ENCODE measurements at regions of chr12 and their contacts with region 1.

Region 1: GRCh38 chr12:22443379-22444316 is 100.7 kb downstream of the C2CD5 start:
- DNase-seq: peak; percentile 83
- ATAC-seq: peak; percentile 99
- H3K4me3 ChIP-seq: no peak overlapping the region
- H3K4me3 Mint-ChIP-seq: no peak overlapping the region
- H3K27ac ChIP-seq: no peak overlapping the region
- H3K27ac Mint-ChIP-seq: no peak overlapping the region
- H3K4me1 ChIP-seq: peaks cover 0 to 3% of the 10 kb centered on the region in 2 donors
- H3K4me1 Mint-ChIP-seq: no peaks in the 10 kb centered on the region
- H3K27me3 ChIP-seq: no peaks in the 10 kb centered on the region
- H3K27me3 Mint-ChIP-seq: no peaks in the 10 kb centered on the region
- CTCF ChIP-seq: peak; percentile 87

Region 2: GRCh38 chr12:21697904-21698630 is 745.6 kb before region 1 on chr12:
- CTCF ChIA-PET with region 1: interaction called, 24 read pairs
- POLR2A ChIA-PET with region 1: no interaction called
- intact Hi-C with region 1: loop called (anchors 1 kb)
- DNase-seq: peak; percentile 37
- ATAC-seq: no peak
- H3K4me3 ChIP-seq: no peak overlapping the region
- H3K4me3 Mint-ChIP-seq: no peak overlapping the region
- H3K27ac ChIP-seq: no peak overlapping the region
- H3K27ac Mint-ChIP-seq: no peak overlapping the region
- H3K4me1 ChIP-seq: no peaks in the 10 kb centered on the region
- H3K4me1 Mint-ChIP-seq: no peaks in the 10 kb centered on the region
- H3K27me3 ChIP-seq: no peaks in the 10 kb centered on the region
- H3K27me3 Mint-ChIP-seq: peaks cover 3% of the 10 kb centered on the region
- CTCF ChIP-seq: peak; percentile 77

Region 3: GRCh38 chr12:22100958-22101748 is 342.5 kb before region 1 on chr12:
- CTCF ChIA-PET with region 1: interaction called, 19 read pairs
- POLR2A ChIA-PET with region 1: no interaction called
- intact Hi-C with region 1: loop called (anchors 1 kb)
- DNase-seq: peak; percentile 63
- ATAC-seq: peak; percentile 53
- H3K4me3 ChIP-seq: no peak overlapping the region
- H3K4me3 Mint-ChIP-seq: no peak overlapping the region
- H3K27ac ChIP-seq: no peak overlapping the region
- H3K27ac Mint-ChIP-seq: no peak overlapping the region
- H3K4me1 ChIP-seq: peaks cover 8 to 13% of the 10 kb centered on the region in 2 donors
- H3K4me1 Mint-ChIP-seq: peaks cover 10% of the 10 kb centered on the region
- H3K27me3 ChIP-seq: no peaks in the 10 kb centered on the region
- H3K27me3 Mint-ChIP-seq: peaks cover 21% of the 10 kb centered on the region
- CTCF ChIP-seq: peak; percentile 45

Region 4: DNA sequence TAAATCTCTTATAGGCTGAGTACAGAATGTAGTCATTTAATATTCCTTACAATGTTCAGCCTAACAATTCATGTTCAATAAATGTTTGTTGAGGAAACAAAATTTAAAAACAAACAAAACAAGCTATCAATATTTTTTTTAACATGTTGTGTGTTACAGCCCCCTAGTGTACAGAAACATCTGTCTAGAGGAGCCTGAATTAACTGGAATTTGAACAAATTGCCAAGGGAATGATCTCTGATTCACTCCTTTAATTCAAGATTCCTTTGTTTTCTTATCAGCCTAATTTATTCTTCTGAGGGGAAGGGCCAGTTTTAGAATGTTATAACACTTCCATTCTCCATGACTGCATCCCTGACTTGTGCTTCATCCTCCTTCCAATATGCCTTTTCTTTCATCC is 270.5 kb before region 1 on chr12:
- CTCF ChIA-PET with region 1: interaction called, 3 read pairs
- POLR2A ChIA-PET with region 1: no interaction called
- intact Hi-C with region 1: loop called (anchors 5 kb)
- DNase-seq: peak; percentile 18
- ATAC-seq: no peak
- H3K4me3 ChIP-seq: no peak overlapping the region
- H3K4me3 Mint-ChIP-seq: no peak overlapping the region
- H3K27ac ChIP-seq: no peak overlapping the region
- H3K27ac Mint-ChIP-seq: no peak overlapping the region
- H3K4me1 ChIP-seq: no peaks in the 10 kb centered on the region
- H3K4me1 Mint-ChIP-seq: peaks cover 5% of the 10 kb centered on the region
- H3K27me3 ChIP-seq: no peaks in the 10 kb centered on the region
- H3K27me3 Mint-ChIP-seq: peaks cover 23% of the 10 kb centered on the region
- CTCF ChIP-seq: peak; percentile 8

Region 5: GRCh38 chr12:22551624-22552023 is 108.0 kb after region 1 on chr12:
- CTCF ChIA-PET with region 1: no interaction called
- POLR2A ChIA-PET with region 1: no interaction called
- intact Hi-C with region 1: no loop called
- DNase-seq: no peak
- ATAC-seq: no peak
- H3K4me3 ChIP-seq: no peak overlapping the region
- H3K4me3 Mint-ChIP-seq: no peak overlapping the region
- H3K27ac ChIP-seq: no peak overlapping the region
- H3K27ac Mint-ChIP-seq: no peak overlapping the region
- H3K4me1 ChIP-seq: peaks cover 5 to 6% of the 10 kb centered on the region in 2 donors
- H3K4me1 Mint-ChIP-seq: peaks cover 2% of the 10 kb centered on the region
- H3K27me3 ChIP-seq: peaks cover 0 to 3% (median 0%) of the 10 kb centered on the region in 4 experiments
- H3K27me3 Mint-ChIP-seq: peaks cover 8% of the 10 kb centered on the region
- CTCF ChIP-seq: no peak

Measured in B cell (primary cell).